Activated naive CD4-positive, alpha-beta T cell treated with anti-CD3 and anti-CD28 coated beads for 36 hours (primary cell): ENCODE measurements at regions of chr1 and their contacts with region 1.

Region 1: DNA sequence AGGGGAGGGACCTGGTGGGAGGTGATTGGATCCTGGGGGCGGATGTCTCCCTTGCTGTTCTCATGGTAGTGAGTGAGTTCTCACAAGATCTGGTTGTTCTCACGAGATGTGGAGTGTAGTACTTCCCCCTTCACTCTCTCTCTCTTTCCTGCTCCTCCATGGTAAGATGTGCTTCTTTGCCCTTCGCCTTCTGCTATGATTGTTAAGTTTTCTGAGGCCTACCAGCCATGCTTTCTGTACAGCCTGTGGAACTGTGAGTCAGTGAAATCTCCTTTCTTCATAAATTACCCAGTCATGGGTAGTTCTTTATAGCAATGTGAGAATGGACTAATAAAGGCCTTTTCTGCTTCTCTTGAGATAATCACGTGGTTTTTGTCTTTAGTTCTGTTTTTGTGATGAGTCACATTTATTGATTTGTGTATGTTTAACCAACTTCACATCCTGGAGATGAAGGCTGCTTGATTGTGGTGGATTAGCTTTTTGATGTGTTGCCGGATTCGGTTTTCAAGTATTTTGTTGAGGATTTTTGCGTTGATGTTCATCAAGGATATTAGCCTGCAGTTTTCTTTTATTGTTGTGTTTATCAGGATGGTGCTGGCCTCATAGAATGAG is 45.5 kb downstream of the RABGAP1L start:
- DNase-seq: peak; percentile 25
- H3K4me3 Mint-ChIP-seq: no peak overlapping the region
- H3K27ac Mint-ChIP-seq: peak overlapping the region; percentile 55
- H3K4me1 Mint-ChIP-seq: peaks cover 48% of the 10 kb centered on the region
- H3K27me3 Mint-ChIP-seq: no peaks in the 10 kb centered on the region

Region 2: GRCh38 chr1:174153085-174153825 is 51.5 kb before region 1 on chr1:
- CTCF ChIA-PET with region 1: interaction called, 5 read pairs
- intact Hi-C with region 1: loop called (anchors 1 kb)
- DNase-seq: no peak
- H3K4me3 Mint-ChIP-seq: no peak overlapping the region
- H3K27ac Mint-ChIP-seq: no peak overlapping the region
- H3K4me1 Mint-ChIP-seq: peaks cover 40% of the 10 kb centered on the region
- H3K27me3 Mint-ChIP-seq: no peaks in the 10 kb centered on the region